T-cell (primary cell): ENCODE measurements at regions of chr21 and their contacts with region 1.

Region 1: DNA sequence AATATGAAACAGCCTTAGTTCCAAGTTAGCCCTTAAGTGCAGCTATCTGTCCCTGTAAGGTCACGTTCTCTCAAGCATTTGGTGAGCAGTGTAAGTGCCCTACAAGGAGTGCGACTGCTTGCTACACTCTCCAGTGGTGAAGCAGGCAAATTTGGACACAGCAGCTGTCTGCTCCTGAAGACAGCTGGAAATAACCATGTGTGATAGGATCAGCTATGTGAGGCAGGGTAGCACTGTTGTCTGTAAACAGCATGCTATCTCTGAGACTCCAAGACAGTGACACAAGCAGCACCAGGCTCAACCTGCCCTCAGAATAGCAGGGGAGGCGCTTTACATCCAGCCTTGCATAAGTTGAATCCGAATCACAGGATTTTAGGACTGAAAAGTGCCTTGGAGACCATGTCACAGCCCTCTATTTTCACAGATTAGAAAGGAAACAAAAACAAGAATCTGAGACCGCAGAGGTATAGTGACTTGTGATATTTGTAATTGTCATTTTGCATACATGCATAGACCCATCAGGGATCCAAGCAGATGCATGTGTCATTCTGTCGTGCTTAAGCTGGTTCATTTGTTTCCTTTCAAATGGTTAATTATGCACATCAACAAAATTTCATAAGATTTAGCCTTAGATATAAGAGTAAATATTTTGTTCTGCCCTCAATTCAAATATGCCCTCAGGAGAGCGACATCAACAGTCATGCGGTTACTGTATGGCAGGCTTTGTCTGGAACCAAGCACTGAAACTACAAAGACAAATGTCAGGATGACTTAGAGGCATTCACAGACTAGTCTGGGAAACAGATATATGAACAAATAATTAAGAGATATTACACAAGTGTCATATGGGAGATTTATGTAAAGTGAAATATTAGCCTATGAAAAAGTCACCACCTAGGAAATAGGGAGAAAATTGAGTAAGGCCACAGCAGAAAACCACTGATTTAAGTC is 134.9 kb upstream of the NRIP1 start:
- DNase-seq: no peak
- ATAC-seq: no peak
- H3K4me3 ChIP-seq: no peak overlapping the region
- H3K4me3 Mint-ChIP-seq: no peak overlapping the region
- H3K27ac ChIP-seq: no peak overlapping the region
- H3K27ac Mint-ChIP-seq: no peak overlapping the region
- H3K4me1 ChIP-seq: no peaks in the 10 kb centered on the region
- H3K4me1 Mint-ChIP-seq: no peaks in the 10 kb centered on the region
- H3K27me3 ChIP-seq: no peaks in the 10 kb centered on the region
- H3K27me3 Mint-ChIP-seq: no peaks in the 10 kb centered on the region

Region 2: DNA sequence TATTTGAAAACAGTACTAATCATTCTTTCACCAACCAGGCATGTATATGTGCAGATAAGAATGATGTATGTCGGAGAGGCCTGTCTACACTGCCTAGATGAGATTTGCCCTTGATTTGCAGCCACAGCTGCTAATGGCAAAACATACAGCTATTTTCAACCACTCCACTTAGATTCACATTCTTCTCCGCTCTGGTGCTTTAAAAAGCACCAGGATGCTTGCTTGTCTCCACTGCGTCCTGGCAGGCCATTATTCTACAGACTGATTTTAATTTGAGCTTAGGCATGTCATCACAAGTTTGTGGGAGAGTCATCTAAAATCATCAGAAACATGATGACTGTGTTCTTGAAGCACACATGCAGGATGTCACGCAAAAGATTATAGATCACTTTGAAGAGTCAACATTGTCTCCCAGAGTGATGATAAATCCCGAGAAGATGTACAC is 15.9 kb before region 1 on chr21:
- CTCF ChIA-PET with region 1: no interaction called
- POLR2A ChIA-PET with region 1: interaction called in 1 of 2 experiments, 12 read pairs
- DNase-seq: no peak
- ATAC-seq: no peak
- H3K4me3 ChIP-seq: no peak overlapping the region
- H3K4me3 Mint-ChIP-seq: no peak overlapping the region
- H3K27ac ChIP-seq: no peak overlapping the region
- H3K27ac Mint-ChIP-seq: no peak overlapping the region
- H3K4me1 ChIP-seq: no peaks in the 10 kb centered on the region
- H3K4me1 Mint-ChIP-seq: no peaks in the 10 kb centered on the region
- H3K27me3 ChIP-seq: no peaks in the 10 kb centered on the region
- H3K27me3 Mint-ChIP-seq: no peaks in the 10 kb centered on the region